HEK293 (cell line): ENCODE measurements at regions of chr4 and their contacts with region 1.

Region 1: GRCh38 chr4:59057804-59058203 is 1947.6 kb upstream of the IGFBP7 start:
- H3K4me3 ChIP-seq: no peak overlapping the region
- H3K27ac ChIP-seq: no peak overlapping the region
- H3K4me1 ChIP-seq: no peaks in the 10 kb centered on the region
- CTCF ChIP-seq: no peak

Region 2: GRCh38 chr4:58935332-58935731 is 122.5 kb before region 1 on chr4:
- CTCF ChIA-PET with region 1: no interaction called
- POLR2A ChIA-PET with region 1: no interaction called
- H3K4me3 ChIP-seq: no peak overlapping the region
- H3K27ac ChIP-seq: no peak overlapping the region
- H3K4me1 ChIP-seq: no peaks in the 10 kb centered on the region
- CTCF ChIP-seq: no peak

Region 3: DNA sequence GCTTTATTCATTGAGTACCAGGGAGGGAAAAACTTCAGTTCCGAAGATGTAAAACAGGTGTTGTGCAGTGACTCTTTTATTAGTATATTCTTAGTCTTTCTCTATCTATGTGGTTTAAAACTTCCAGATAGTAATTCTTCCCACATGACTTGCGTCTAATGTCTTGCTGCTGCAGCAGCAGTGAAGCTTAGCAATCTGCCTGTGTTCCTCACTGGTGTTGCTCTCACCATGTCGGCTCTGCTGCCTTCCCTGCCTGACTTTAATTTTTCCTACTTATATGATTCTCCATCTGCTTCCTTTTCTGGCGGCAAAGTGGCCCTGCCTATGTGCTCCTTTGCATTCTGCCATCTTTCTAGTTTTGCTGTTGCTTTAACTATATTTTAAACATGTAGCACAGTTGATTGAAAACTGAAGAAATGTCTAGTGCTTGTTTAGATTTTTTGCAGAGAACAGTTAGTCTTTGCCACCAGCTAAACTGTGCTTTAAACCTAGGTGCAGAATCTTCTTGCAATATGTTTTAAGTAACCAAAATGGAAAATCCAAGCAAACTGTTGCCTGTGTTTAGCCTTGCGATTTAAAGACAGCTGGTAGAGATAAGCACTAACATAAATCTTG is 13.4 kb before region 1 on chr4:
- CTCF ChIA-PET with region 1: no interaction called
- POLR2A ChIA-PET with region 1: interaction called, 11 read pairs
- H3K4me3 ChIP-seq: no peak overlapping the region
- H3K27ac ChIP-seq: no peak overlapping the region
- H3K4me1 ChIP-seq: no peaks in the 10 kb centered on the region
- CTCF ChIP-seq: no peak